ENCODE measurements at regions of chr14 and their contacts with region 1.

Region 1: DNA sequence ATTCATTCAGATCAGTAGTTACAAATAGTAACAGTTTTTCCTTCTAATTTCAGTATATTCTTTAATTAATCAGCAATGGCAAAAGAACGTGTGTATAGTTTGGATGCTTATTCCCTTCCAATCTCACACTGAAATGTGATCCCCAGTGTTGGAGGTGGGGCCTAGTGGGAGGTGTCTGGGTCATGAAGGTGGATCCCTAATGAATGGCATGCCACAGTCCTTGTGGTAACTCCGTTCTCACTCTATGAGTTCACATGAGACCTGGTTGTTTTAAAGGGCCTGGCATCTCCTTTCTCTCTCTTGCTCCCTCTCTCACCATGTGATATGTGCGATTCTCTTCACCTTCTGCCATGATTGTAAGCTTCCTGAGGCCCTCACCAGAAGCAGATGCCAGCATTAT is 18.9 kb upstream of the SYNDIG1L start:
- DNase-seq: no peak
- H3K4me3 ChIP-seq: no peak overlapping the region
- H3K27me3 ChIP-seq: peaks cover 10% of the 10 kb centered on the region
- CTCF ChIP-seq: no peak

Region 2: GRCh38 chr14:74638066-74638465 is 193.2 kb after region 1 on chr14:
- CTCF ChIA-PET with region 1: no interaction called
- POLR2A ChIA-PET with region 1: interaction called, 14 read pairs
- DNase-seq: no peak
- H3K4me3 ChIP-seq: no peak overlapping the region
- H3K27me3 ChIP-seq: no peaks in the 10 kb centered on the region
- CTCF ChIP-seq: no peak

Region 3: GRCh38 chr14:74655599-74656389 is 210.9 kb after region 1 on chr14:
- CTCF ChIA-PET with region 1: no interaction called
- POLR2A ChIA-PET with region 1: no interaction called
- DNase-seq: peak; percentile 60
- H3K4me3 ChIP-seq: no peak overlapping the region
- H3K27me3 ChIP-seq: no peaks in the 10 kb centered on the region
- CTCF ChIP-seq: no peak

Measured in BJ (cell line).